Calu3 (cell line): ENCODE measurements at regions of chr1 and their contacts with region 1.

Region 1: GRCh38 chr1:35451125-35451528 is 106.1 kb downstream of the KIAA0319L start:
- DNase-seq: peak; percentile 80
- H3K4me3 Mint-ChIP-seq: no peak overlapping the region
- H3K27ac Mint-ChIP-seq: no peak overlapping the region
- H3K4me1 Mint-ChIP-seq: no peaks in the 10 kb centered on the region
- H3K27me3 Mint-ChIP-seq: no peaks in the 10 kb centered on the region
- CTCF ChIP-seq: peak; percentile 81

Region 2: DNA sequence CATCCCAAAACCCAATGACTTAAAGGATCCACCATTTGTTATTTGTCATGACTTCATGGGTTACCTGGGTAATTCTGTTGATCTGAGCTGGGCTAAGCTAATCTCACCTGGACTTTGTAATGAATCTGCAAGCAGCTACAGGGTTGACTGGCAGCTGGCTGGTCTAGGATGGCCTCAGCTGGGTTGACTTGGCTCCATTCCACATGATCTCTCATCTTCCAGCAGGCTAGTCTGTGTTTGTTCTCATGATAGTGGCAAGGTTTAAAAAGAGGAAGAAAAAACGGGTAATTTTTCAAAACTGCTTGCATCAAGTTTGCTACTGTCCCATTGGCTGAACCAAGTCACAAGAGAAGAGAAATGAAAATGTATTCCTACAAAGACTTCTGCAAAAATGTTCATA is 207.4 kb before region 1 on chr1:
- CTCF ChIA-PET with region 1: no interaction called
- intact Hi-C with region 1: no loop called
- DNase-seq: no peak
- H3K4me3 Mint-ChIP-seq: no peak overlapping the region
- H3K27ac Mint-ChIP-seq: no peak overlapping the region
- H3K4me1 Mint-ChIP-seq: no peaks in the 10 kb centered on the region
- H3K27me3 Mint-ChIP-seq: no peaks in the 10 kb centered on the region
- CTCF ChIP-seq: no peak

Region 3: GRCh38 chr1:35557292-35558063 is 106.4 kb after region 1 on chr1 and contains the starts of genes KIAA0319L and NCDN:
- CTCF ChIA-PET with region 1: interaction called, 20 read pairs
- intact Hi-C with region 1: loop called (anchors 2 kb)
- DNase-seq: peak; percentile 96
- H3K4me3 Mint-ChIP-seq: peak within 1 kb of the TSS; percentile 96
- H3K27ac Mint-ChIP-seq: peak within 1 kb of the TSS; percentile 93
- H3K4me1 Mint-ChIP-seq: peaks cover 23% of the 10 kb centered on the region
- H3K27me3 Mint-ChIP-seq: no peaks in the 10 kb centered on the region
- CTCF ChIP-seq: no peak
- total RNA-seq, gene KIAA0319L: 72.0 and 72.6 TPM in 2 replicates
- total RNA-seq, gene NCDN: 36.0 and 38.0 TPM in 2 replicates

Region 4: GRCh38 chr1:35564037-35564883 is 113.1 kb after region 1 on chr1:
- CTCF ChIA-PET with region 1: interaction called, 63 read pairs
- intact Hi-C with region 1: loop called (anchors 1 kb)
- DNase-seq: peak; percentile 82
- H3K4me3 Mint-ChIP-seq: no peak overlapping the region
- H3K27ac Mint-ChIP-seq: no peak overlapping the region
- H3K4me1 Mint-ChIP-seq: peaks cover 1% of the 10 kb centered on the region
- H3K27me3 Mint-ChIP-seq: no peaks in the 10 kb centered on the region
- CTCF ChIP-seq: peak; percentile 71

Region 5: DNA sequence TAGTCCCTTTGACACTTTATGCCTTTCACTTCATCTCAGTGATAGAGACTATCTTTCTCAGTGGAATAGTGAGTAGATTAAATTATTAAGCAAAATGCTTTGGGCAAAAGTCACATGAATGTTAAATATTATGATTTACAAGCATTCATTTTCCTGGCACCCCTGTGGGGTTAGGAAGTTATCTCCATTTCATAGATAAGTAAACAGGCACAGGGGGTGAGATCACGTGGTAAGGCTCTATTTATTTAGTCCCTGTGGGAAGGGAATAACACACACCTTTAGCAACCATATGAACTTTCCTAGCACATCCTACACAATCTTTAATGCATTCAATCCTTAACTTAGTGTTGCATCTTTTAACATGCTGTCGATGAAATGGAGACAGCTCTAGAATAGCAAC is 177.9 kb after region 1 on chr1:
- CTCF ChIA-PET with region 1: no interaction called
- intact Hi-C with region 1: no loop called
- DNase-seq: no peak
- H3K4me3 Mint-ChIP-seq: no peak overlapping the region
- H3K27ac Mint-ChIP-seq: no peak overlapping the region
- H3K4me1 Mint-ChIP-seq: peaks cover 8% of the 10 kb centered on the region
- H3K27me3 Mint-ChIP-seq: no peaks in the 10 kb centered on the region
- CTCF ChIP-seq: no peak

Region 6: GRCh38 chr1:35715568-35716002 is 264.5 kb after region 1 on chr1:
- CTCF ChIA-PET with region 1: interaction called, 3 read pairs
- intact Hi-C with region 1: loop called (anchors 5 kb)
- DNase-seq: peak; percentile 79
- H3K4me3 Mint-ChIP-seq: no peak overlapping the region
- H3K27ac Mint-ChIP-seq: no peak overlapping the region
- H3K4me1 Mint-ChIP-seq: peaks cover 24% of the 10 kb centered on the region
- H3K27me3 Mint-ChIP-seq: no peaks in the 10 kb centered on the region
- CTCF ChIP-seq: peak; percentile 65

Region 7: DNA sequence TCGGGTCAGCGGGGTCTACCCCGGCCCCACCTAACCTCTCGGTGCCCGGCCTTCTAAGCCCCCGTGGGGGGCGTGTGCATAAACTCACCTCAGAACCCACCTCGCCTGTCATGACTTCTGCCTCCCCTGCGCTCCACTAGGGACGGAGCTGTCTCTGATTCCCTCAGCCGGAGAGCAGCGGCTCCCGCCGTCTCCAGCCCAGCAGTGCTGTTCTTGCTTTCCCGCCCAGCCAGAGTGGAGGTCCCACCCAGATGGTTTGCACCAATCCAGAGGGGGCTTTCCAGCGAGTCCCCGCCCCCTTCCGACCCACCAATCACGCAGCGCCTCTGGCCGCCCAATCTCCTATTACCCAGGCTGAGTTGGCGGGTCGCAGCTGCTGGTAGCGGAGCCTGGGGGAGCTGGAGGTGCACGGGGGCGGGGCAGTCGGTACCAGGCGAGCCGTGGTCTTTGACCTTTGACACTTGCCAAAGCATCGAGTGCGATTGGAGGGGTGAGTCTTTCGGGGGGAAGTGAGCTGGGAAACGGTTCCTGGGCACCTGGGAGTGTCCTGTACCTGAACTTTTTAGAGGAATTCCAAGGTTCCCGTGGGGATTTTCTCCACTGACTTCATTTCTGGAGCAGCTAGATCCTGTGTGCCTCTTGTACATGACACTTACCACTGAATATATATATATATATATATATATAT is 318.8 kb after region 1 on chr1 and contains the start of gene CLSPN:
- CTCF ChIA-PET with region 1: no interaction called
- intact Hi-C with region 1: loop called (anchors 2 kb)
- DNase-seq: peak; percentile 97
- H3K4me3 Mint-ChIP-seq: peak within 1 kb of the TSS; percentile 80
- H3K27ac Mint-ChIP-seq: peak within 1 kb of the TSS; percentile 68
- H3K4me1 Mint-ChIP-seq: no peaks in the 10 kb centered on the region
- H3K27me3 Mint-ChIP-seq: no peaks in the 10 kb centered on the region
- CTCF ChIP-seq: no peak
- total RNA-seq, gene CLSPN: 30.3 and 30.4 TPM in 2 replicates